ENCODE measurements at regions of chr9 and their contacts with region 1.

Region 1: DNA sequence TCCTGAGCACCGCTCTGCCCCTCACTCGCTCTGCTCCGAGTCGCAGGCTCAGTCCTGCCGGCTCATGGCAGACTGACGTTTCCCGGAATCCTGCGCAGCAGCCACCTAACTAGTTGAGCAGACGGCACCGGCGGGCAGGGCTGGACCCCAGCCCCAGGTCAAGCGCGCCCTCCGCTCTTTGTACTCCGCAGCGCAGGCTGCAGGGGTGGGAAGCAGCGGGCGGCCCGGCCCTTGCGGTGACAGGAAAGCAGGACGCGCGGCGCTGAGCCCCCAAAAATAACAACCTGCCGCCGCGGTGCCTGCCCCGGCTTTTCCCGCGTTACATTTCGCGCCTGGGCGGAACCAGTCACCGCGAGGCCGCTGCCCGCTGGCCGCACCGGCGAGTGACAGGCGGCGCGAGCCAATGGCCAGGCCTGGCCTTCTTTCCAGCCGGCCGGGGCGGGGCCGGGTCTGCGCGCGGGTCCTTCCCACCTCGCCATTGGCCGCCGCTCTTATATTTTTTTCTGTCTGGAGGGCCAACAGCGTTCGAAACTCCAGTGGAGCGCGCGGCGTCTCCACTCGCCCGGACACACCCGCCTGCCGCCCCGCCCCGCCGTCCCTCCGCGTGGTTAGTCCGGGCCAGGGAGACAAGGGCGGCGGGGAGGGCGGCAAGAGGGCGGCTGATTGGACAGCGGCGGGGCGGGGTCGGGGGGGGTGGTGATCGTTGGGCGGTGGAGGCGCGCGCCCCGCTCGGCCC is at the start of gene ZNF367:
- DNase-seq: peak; percentile 97
- H3K4me3 Mint-ChIP-seq: peak within 1 kb of the TSS; percentile 96
- H3K27ac Mint-ChIP-seq: peak within 1 kb of the TSS; percentile 97
- H3K4me1 Mint-ChIP-seq: peaks cover 49% of the 10 kb centered on the region
- H3K27me3 Mint-ChIP-seq: no peaks in the 10 kb centered on the region
- total RNA-seq, gene ZNF367: 27.7 to 28.7 TPM

Region 2: GRCh38 chr9:96071076-96071814 is 347.0 kb before region 1 on chr9:
- CTCF ChIA-PET with region 1: no interaction called
- POLR2A ChIA-PET with region 1: no interaction called
- DNase-seq: peak; percentile 28
- H3K4me3 Mint-ChIP-seq: no peak overlapping the region
- H3K27ac Mint-ChIP-seq: no peak overlapping the region
- H3K4me1 Mint-ChIP-seq: peaks cover 6% of the 10 kb centered on the region
- H3K27me3 Mint-ChIP-seq: peaks cover 6% of the 10 kb centered on the region

Region 3: GRCh38 chr9:96320749-96321280 is 97.4 kb before region 1 on chr9:
- CTCF ChIA-PET with region 1: no interaction called
- POLR2A ChIA-PET with region 1: no interaction called
- DNase-seq: no peak
- H3K4me3 Mint-ChIP-seq: no peak overlapping the region
- H3K27ac Mint-ChIP-seq: no peak overlapping the region
- H3K4me1 Mint-ChIP-seq: no peaks in the 10 kb centered on the region
- H3K27me3 Mint-ChIP-seq: peaks cover 2% of the 10 kb centered on the region

Region 4: GRCh38 chr9:96398582-96399324 is 19.5 kb before region 1 on chr9:
- CTCF ChIA-PET with region 1: no interaction called
- POLR2A ChIA-PET with region 1: interaction called, 14 read pairs
- DNase-seq: no peak
- H3K4me3 Mint-ChIP-seq: no peak overlapping the region
- H3K27ac Mint-ChIP-seq: peak overlapping the region; percentile 81
- H3K4me1 Mint-ChIP-seq: peaks cover 43% of the 10 kb centered on the region
- H3K27me3 Mint-ChIP-seq: no peaks in the 10 kb centered on the region

Region 5: GRCh38 chr9:96449845-96450612 is 31.8 kb after region 1 on chr9 and contains the start of gene HABP4:
- CTCF ChIA-PET with region 1: interaction called, 6 read pairs
- POLR2A ChIA-PET with region 1: interaction called, 47 read pairs
- DNase-seq: peak; percentile 96
- H3K4me3 Mint-ChIP-seq: peak within 1 kb of the TSS; percentile 85
- H3K27ac Mint-ChIP-seq: peak within 1 kb of the TSS; percentile 44
- H3K4me1 Mint-ChIP-seq: peaks cover 29% of the 10 kb centered on the region
- H3K27me3 Mint-ChIP-seq: peaks cover 11% of the 10 kb centered on the region
- total RNA-seq, gene HABP4: 13.1 to 14.1 TPM

Region 6: GRCh38 chr9:96566498-96567207 is 148.4 kb after region 1 on chr9:
- CTCF ChIA-PET with region 1: interaction called, 3 read pairs
- POLR2A ChIA-PET with region 1: interaction called, 13 read pairs
- DNase-seq: peak; percentile 80
- H3K4me3 Mint-ChIP-seq: peak overlapping the region; percentile 76
- H3K27ac Mint-ChIP-seq: peak overlapping the region; percentile 73
- H3K4me1 Mint-ChIP-seq: peaks cover 26% of the 10 kb centered on the region
- H3K27me3 Mint-ChIP-seq: peaks cover 1% of the 10 kb centered on the region

Measured in activated CD4-positive, alpha-beta memory T cell treated with anti-CD3 and anti-CD28 coated beads, Interleukin-2, amount 10 ng/mL, durations not matched to agents 7 days and 5 days (primary cell).